Activated B cell treated with CpG ODN at 0.5 μM for 24 hours (primary cell): ENCODE measurements at regions of chr11 and their contacts with region 1.

Region 1: GRCh38 chr11:100681064-100681502 is 6.0 kb upstream of the ARHGAP42 start:
- DNase-seq: peak; percentile 58
- ATAC-seq: peak; percentile 98
- H3K4me3 Mint-ChIP-seq: peak overlapping the region; percentile 35
- H3K27ac Mint-ChIP-seq: peak overlapping the region; percentile 79
- H3K4me1 Mint-ChIP-seq: peaks cover 57% of the 10 kb centered on the region
- H3K27me3 Mint-ChIP-seq: no peaks in the 10 kb centered on the region
- CTCF ChIP-seq: no peak

Region 2: GRCh38 chr11:100612766-100613165 is 68.3 kb before region 1 on chr11:
- CTCF ChIA-PET with region 1: no interaction called
- POLR2A ChIA-PET with region 1: no interaction called
- intact Hi-C with region 1: loop called (anchors 1 kb)
- DNase-seq: no peak
- ATAC-seq: peak; percentile 96
- H3K4me3 Mint-ChIP-seq: peak overlapping the region; percentile 29
- H3K27ac Mint-ChIP-seq: peak overlapping the region; percentile 47
- H3K4me1 Mint-ChIP-seq: peaks cover 23% of the 10 kb centered on the region
- H3K27me3 Mint-ChIP-seq: no peaks in the 10 kb centered on the region
- CTCF ChIP-seq: no peak

Region 3: DNA sequence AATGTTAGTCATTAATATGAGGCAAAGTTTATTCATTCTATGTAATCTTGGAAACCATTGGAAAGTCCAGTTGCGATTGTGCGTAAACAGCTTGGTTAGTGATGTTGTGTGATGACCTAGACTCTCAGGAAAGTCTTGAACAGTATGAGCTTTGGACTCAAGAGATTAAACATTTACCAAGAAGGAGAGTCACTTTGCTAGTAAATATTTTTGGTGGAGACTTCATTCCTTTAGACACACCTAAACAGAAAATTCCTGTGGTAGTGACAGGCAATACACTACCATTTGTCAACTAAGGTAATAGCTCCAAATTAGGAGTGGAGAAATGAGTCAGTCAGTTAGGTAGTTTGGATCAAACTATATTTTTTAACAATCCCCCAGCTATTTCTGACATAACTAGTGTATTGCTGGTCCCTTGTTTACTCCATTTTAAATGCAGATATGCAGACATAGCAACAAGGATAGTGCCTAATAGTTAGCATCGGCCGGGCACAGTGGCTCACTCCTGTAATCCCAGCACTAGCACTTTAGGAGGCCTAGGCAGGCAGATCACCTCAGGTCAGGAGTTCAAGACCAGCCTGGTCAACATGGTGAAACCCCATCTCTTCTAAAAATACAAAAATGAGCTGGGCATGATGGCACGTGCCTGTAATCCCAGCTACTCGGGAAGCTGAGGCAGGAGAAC is 95.3 kb after region 1 on chr11:
- CTCF ChIA-PET with region 1: no interaction called
- POLR2A ChIA-PET with region 1: no interaction called
- intact Hi-C with region 1: no loop called
- DNase-seq: no peak
- ATAC-seq: no peak
- H3K4me3 Mint-ChIP-seq: no peak overlapping the region
- H3K27ac Mint-ChIP-seq: no peak overlapping the region
- H3K4me1 Mint-ChIP-seq: peaks cover 3% of the 10 kb centered on the region
- H3K27me3 Mint-ChIP-seq: no peaks in the 10 kb centered on the region
- CTCF ChIP-seq: no peak

Region 4: GRCh38 chr11:100827934-100828661 is 147.0 kb after region 1 on chr11:
- CTCF ChIA-PET with region 1: interaction called, 5 read pairs
- POLR2A ChIA-PET with region 1: no interaction called
- intact Hi-C with region 1: loop called (anchors 1 kb)
- DNase-seq: no peak
- ATAC-seq: peak; percentile 70
- H3K4me3 Mint-ChIP-seq: no peak overlapping the region
- H3K27ac Mint-ChIP-seq: no peak overlapping the region
- H3K4me1 Mint-ChIP-seq: peaks cover 2% of the 10 kb centered on the region
- H3K27me3 Mint-ChIP-seq: no peaks in the 10 kb centered on the region
- CTCF ChIP-seq: no peak

Region 5: GRCh38 chr11:100855466-100856067 is 174.5 kb after region 1 on chr11:
- CTCF ChIA-PET with region 1: interaction called, 7 read pairs
- POLR2A ChIA-PET with region 1: interaction called, 3 read pairs
- intact Hi-C with region 1: loop called (anchors 1 kb)
- DNase-seq: no peak
- ATAC-seq: no peak
- H3K4me3 Mint-ChIP-seq: no peak overlapping the region
- H3K27ac Mint-ChIP-seq: no peak overlapping the region
- H3K4me1 Mint-ChIP-seq: no peaks in the 10 kb centered on the region
- H3K27me3 Mint-ChIP-seq: no peaks in the 10 kb centered on the region
- CTCF ChIP-seq: peak; percentile 66

Region 6: GRCh38 chr11:100930185-100930778 is 249.2 kb after region 1 on chr11:
- CTCF ChIA-PET with region 1: interaction called, 3 read pairs
- POLR2A ChIA-PET with region 1: no interaction called
- intact Hi-C with region 1: loop called (anchors 1 kb)
- DNase-seq: no peak
- ATAC-seq: no peak
- H3K4me3 Mint-ChIP-seq: no peak overlapping the region
- H3K27ac Mint-ChIP-seq: no peak overlapping the region
- H3K4me1 Mint-ChIP-seq: peaks cover 10% of the 10 kb centered on the region
- H3K27me3 Mint-ChIP-seq: no peaks in the 10 kb centered on the region
- CTCF ChIP-seq: no peak